GM12878 (cell line): ENCODE measurements at regions of chr3 and their contacts with region 1.

Region 1: DNA sequence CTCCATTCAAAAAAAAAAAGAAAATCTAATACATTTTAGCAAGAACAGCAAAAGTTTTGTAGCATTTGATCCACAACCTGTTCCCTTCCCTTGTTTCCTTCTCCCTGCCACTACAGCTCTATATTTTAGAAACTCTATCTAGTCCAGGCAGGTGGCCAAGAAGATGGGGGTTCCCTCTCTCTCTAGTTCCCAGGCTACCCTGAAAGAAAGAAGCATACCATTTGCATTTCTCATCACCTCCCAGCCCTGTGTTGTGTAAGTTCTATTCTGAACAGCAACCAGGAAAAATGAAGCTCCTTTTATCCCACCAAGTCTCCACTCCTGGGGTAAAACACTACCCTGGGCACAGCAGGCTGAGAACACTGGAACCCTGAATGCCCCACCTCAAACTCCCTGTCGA is 100.0 kb downstream of the PCCB start:
- DNase-seq: no peak
- ATAC-seq: no peak
- H3K4me3 ChIP-seq: no peak overlapping the region
- H3K27ac ChIP-seq: no peak overlapping the region
- H3K4me1 ChIP-seq: peaks cover 6% of the 10 kb centered on the region; the same call in 1 of the 2 replicates
- H3K27me3 ChIP-seq: no peaks in the 10 kb centered on the region
- CTCF ChIP-seq: no peak
- EP300 ChIP-seq: no peak
- POLR2A ChIP-seq: no peak
- RAD21 ChIP-seq: no peak

Region 2: GRCh38 chr3:136336329-136337100 is 13.6 kb before region 1 on chr3:
- CTCF ChIA-PET with region 1: interaction called, 11 read pairs
- POLR2A ChIA-PET with region 1: no interaction called
- RAD21 ChIA-PET with region 1: no interaction called
- SMC1A ChIA-PET with region 1: no interaction called
- in situ Hi-C with region 1: no loop called
- intact Hi-C with region 1: no loop called
- DNase-seq: no peak
- ATAC-seq: no peak
- H3K4me3 ChIP-seq: no peak overlapping the region
- H3K27ac ChIP-seq: no peak overlapping the region
- H3K4me1 ChIP-seq: no peaks in the 10 kb centered on the region
- H3K27me3 ChIP-seq: no peaks in the 10 kb centered on the region
- CTCF ChIP-seq: no peak
- EP300 ChIP-seq: no peak
- POLR2A ChIP-seq: no peak
- RAD21 ChIP-seq: no peak

Region 3: GRCh38 chr3:136366289-136366688 is 16.2 kb after region 1 on chr3:
- CTCF ChIA-PET with region 1: interaction called, 14 read pairs
- POLR2A ChIA-PET with region 1: interaction called, 7 read pairs
- RAD21 ChIA-PET with region 1: no interaction called
- SMC1A ChIA-PET with region 1: interaction called, 3 read pairs
- in situ Hi-C with region 1: no loop called
- intact Hi-C with region 1: no loop called
- DNase-seq: no peak
- ATAC-seq: no peak
- H3K4me3 ChIP-seq: no peak overlapping the region
- H3K27ac ChIP-seq: no peak overlapping the region
- H3K4me1 ChIP-seq: no peaks in the 10 kb centered on the region
- H3K27me3 ChIP-seq: no peaks in the 10 kb centered on the region
- CTCF ChIP-seq: no peak
- EP300 ChIP-seq: no peak
- POLR2A ChIP-seq: no peak
- RAD21 ChIP-seq: no peak

Region 4: DNA sequence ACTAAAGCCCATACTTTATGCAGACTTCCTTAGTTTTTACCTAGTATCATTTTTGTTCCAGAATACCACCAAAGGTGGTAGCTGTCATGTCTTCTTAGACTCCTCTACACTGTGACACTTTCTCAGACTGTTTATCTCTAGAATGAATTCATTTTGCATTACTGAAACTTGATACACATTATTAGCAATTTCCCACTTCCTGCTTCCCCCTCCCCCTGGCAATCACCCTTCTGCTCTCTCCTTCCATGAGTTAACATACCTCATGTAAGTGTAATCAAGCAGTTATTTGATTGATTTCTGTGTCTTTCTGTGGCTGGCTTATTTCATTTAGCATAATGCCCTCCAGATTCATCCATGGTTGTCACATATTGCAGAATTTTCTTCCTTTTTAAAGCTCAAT is 197.2 kb after region 1 on chr3:
- CTCF ChIA-PET with region 1: no interaction called
- POLR2A ChIA-PET with region 1: no interaction called
- RAD21 ChIA-PET with region 1: no interaction called
- SMC1A ChIA-PET with region 1: no interaction called
- in situ Hi-C with region 1: no loop called
- intact Hi-C with region 1: no loop called
- DNase-seq: peak; percentile 9
- ATAC-seq: peak; percentile 83
- H3K4me3 ChIP-seq: no peak overlapping the region
- H3K27ac ChIP-seq: no peak overlapping the region
- H3K4me1 ChIP-seq: no peaks in the 10 kb centered on the region
- H3K27me3 ChIP-seq: no peaks in the 10 kb centered on the region
- CTCF ChIP-seq: no peak
- EP300 ChIP-seq: no peak
- POLR2A ChIP-seq: no peak
- RAD21 ChIP-seq: no peak